ENCODE measurements at regions of chr17 and their contacts with region 1.

Region 1: GRCh38 chr17:19753049-19753444 is 4.9 kb upstream of the ALDH3A1 start:
- DNase-seq: peak; percentile 87

Region 2: GRCh38 chr17:19520641-19521040 is 232.4 kb before region 1 on chr17:
- intact Hi-C with region 1: loop called in 1 of 2 experiments (anchors 5 kb)
- DNase-seq: peak; percentile 60

Region 3: DNA sequence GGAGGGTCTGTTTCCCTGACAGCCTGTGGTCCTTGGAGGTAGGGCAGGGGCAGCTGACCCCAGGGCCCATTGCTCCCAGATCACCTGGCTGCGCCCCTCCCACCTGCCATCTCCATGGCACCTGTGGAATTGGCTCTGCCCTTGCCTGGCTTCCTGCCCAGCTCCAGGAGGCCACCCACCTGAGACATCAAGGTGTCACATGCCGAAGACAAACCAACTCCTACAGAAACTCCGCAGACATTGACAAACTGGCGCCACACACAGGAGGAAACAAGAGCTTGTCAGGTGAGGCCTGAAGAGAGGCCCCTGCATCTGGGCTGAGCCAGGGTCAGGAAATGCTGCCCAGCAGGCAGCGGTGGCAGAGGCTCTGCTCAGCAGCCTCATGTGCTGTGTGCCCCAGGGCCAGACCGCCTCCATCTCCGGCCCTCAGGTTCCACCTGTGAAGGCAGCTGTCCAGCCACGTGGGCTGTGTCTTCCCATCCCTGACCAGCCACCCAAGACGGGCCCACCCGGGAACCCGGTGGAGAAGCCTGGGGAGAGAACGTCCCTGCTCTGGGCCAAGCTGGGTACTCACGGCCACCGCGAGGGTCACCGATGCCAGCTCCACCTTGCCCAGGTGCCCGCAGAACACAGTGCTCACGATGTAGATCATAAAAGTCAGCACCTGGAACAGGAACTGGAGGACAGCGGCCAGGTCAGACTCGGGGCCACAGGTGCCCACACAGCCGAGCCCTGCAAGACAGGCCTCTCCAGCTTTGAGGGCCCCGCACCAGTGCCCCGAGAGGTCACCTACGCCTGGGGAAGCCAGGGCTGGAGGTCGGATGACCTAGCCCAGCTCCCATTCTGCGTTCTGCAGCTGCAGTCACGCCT is 38.3 kb before region 1 on chr17:
- intact Hi-C with region 1: loop called in 1 of 2 experiments (anchors 1 kb)
- DNase-seq: no peak

Region 4: DNA sequence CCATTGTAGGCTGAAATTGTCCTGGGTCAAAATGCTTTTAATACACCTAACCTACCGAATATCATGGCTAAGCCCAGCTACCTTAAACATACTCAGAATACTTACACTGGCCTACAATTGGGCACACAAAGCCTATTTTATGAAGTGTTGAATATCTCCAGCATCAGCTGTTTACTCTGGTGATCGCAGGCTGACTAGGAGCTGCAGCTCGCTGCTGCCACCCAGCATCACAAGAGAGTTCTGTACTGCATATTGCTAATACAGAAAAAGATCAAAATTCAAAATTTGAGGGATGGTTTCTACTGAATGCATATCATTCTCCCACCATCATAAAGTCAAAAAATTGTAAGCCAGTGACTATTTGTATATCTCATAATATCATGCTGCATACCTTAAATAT is 59.4 kb after region 1 on chr17:
- intact Hi-C with region 1: no loop called
- DNase-seq: no peak

Measured in posterior vena cava (tissue), 2 donors.